Psoas muscle (tissue), 8 donors: ENCODE measurements at regions of chr17 and their contacts with region 1.

Region 1: DNA sequence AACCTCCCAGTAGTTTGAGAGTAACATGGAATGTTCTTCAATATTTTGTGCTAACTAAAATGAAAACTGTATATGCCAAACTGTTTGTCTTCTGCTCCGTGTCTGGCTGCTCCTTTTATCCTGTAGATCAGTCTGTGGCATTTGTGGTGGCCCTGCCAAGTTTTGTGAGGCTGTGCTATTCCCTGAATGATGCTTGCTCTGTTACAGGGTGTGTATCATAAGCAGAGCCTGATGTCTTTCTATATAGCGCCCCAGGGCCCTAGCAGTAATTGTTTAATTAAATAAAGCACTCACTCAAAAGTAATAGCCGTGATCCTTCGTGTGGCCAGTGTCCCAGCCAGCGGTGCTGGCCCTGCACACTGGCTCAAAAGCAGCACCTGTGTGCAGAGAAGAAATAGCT is 27.8 kb upstream of the NAT9 start:
- DNase-seq: no peak
- ATAC-seq: no peak
- H3K4me3 ChIP-seq: no peak overlapping the region
- H3K27ac ChIP-seq: no peak overlapping the region
- H3K4me1 ChIP-seq: no peaks in the 10 kb centered on the region
- H3K27me3 ChIP-seq: no peaks in the 10 kb centered on the region
- CTCF ChIP-seq: no peak

Region 2: GRCh38 chr17:74849932-74850709 is 46.1 kb after region 1 on chr17:
- intact Hi-C with region 1: loop called in 1 of 2 experiments (anchors 5 kb)
- DNase-seq: no peak
- ATAC-seq: no peak
- H3K4me3 ChIP-seq: no peak overlapping the region
- H3K27ac ChIP-seq: no peak overlapping the region
- H3K4me1 ChIP-seq: no peaks in the 10 kb centered on the region
- H3K27me3 ChIP-seq: peaks cover 0 to 59% (median 8%) of the 10 kb centered on the region in 3 donors
- CTCF ChIP-seq: no peak